ENCODE measurements at regions of chr7 and their contacts with region 1.

Region 1: GRCh38 chr7:141654551-141654950 is 47.4 kb downstream of the DENND11 start:
- DNase-seq: no peak
- ATAC-seq: peak; percentile 45

Region 2: GRCh38 chr7:141251957-141252356 is 402.6 kb before region 1 on chr7:
- intact Hi-C with region 1: loop called (anchors 10 kb)
- DNase-seq: no peak
- ATAC-seq: peak; percentile 50

Region 3: GRCh38 chr7:141617280-141617679 is 37.3 kb before region 1 on chr7:
- intact Hi-C with region 1: no loop called
- DNase-seq: no peak
- ATAC-seq: no peak

Region 4: DNA sequence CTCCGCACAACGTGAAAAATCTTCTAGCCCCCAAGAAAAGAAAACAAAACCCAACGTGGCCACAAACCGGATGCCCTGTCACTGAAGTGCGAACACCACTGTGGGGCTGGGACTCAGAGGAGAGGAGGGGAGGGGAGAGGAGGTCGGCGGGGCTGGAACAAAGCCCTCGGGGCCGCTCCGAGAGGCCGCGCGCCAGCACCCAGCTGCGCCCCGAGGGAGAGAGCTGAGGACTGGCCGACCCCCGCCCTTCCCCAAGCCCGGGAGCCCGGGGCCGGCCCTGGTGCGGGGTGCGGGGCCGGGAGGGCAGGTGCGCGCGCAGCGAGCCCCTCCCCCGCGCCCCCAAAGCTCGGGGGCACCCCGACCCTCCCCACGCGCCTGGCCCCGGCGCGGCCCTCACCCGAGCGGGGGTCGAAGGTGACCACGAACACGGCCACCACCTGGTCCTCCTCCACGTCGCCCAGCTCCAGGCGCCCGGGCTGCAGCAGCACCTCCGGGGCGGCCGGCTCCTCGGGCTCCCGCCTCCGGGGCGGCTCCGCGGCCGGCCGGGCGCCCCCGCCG is 47.0 kb after region 1 on chr7:
- intact Hi-C with region 1: loop called (anchors 10 kb)
- DNase-seq: peak; percentile 74
- ATAC-seq: peak; percentile 51

Region 5: GRCh38 chr7:141737834-141738591 is 83.5 kb after region 1 on chr7 and contains the start of gene SSBP1:
- intact Hi-C with region 1: loop called (anchors 1 kb)
- DNase-seq: peak; percentile 94
- ATAC-seq: peak; percentile 98
- total RNA-seq, gene SSBP1: 109 TPM

Region 6: GRCh38 chr7:141785706-141786552 is 131.4 kb after region 1 on chr7:
- intact Hi-C with region 1: loop called (anchors 5 kb)
- DNase-seq: no peak
- ATAC-seq: no peak